ENCODE measurements at regions of chr2 and their contacts with region 1.

Region 1: GRCh38 chr2:101328474-101329007 is 20.0 kb upstream of the RNF149 start:
- DNase-seq: peak; percentile 68
- H3K4me3 Mint-ChIP-seq: no peak overlapping the region
- H3K27ac Mint-ChIP-seq: no peak overlapping the region
- H3K4me1 Mint-ChIP-seq: peaks cover 17% of the 10 kb centered on the region
- H3K27me3 Mint-ChIP-seq: no peaks in the 10 kb centered on the region

Region 2: DNA sequence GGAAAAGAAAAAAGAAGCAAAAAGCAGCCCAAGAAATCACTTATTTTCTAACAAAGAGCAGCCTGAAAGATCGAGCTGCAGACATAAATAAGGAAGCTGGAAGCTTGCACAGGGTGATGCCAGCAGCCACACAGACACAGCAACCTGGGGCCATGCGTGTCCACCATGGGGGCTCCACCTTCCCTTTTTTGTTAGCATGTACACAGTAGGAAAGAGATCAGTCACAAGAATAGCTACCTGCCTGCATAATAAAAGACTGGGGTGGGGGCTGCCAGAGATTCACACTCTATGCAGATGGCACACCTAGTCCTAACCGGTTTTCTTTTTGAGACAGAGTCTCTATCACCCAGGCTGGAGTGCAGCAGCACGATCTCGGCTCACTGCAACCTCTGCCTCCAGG is 78.7 kb before region 1 on chr2:
- CTCF ChIA-PET with region 1: no interaction called
- POLR2A ChIA-PET with region 1: no interaction called
- DNase-seq: no peak
- H3K4me3 Mint-ChIP-seq: no peak overlapping the region
- H3K27ac Mint-ChIP-seq: no peak overlapping the region
- H3K4me1 Mint-ChIP-seq: peaks cover 27% of the 10 kb centered on the region
- H3K27me3 Mint-ChIP-seq: no peaks in the 10 kb centered on the region

Region 3: DNA sequence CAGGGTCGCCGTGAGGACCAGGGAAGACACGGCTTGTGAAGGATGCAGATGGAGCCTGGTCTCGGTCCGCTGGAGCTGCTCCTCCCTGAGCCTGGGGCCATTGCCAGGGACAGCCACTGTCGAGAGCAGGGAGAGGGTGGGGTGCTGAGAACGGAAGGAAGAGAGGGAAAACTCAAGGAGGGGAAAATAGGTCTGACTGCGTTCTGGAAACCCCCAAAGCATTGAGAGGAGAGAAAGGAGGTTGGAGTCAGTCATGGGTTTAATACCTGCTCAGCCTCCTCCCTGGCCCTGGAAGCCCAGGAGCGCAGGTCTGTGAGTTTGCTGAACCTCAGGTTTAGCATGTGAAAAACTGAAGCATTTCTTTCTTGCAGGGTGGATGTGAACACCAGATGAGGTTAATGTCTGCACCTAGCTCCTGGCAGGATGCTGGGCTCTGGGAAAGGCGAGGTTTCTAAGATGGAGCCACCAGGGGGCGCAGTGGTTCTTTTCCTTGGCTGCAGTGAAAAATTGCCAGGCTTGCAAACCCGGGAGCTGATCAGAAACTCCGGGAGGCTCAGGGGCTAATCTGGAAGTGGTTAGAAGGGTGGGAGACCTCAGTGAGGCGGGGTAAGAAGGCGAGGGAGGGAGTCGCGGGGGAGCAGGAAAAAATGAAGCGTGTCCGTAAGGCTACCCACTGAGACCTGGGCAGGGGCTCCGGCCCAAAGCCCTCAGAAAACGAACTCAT is 13.5 kb after region 1 on chr2:
- CTCF ChIA-PET with region 1: interaction called, 30 read pairs
- POLR2A ChIA-PET with region 1: interaction called, 5 read pairs
- DNase-seq: peak; percentile 74
- H3K4me3 Mint-ChIP-seq: no peak overlapping the region
- H3K27ac Mint-ChIP-seq: peak overlapping the region; percentile 0
- H3K4me1 Mint-ChIP-seq: peaks cover 39% of the 10 kb centered on the region
- H3K27me3 Mint-ChIP-seq: peaks cover 5% of the 10 kb centered on the region

Region 4: GRCh38 chr2:101349893-101350662 is 21.5 kb after region 1 on chr2:
- CTCF ChIA-PET with region 1: interaction called, 15 read pairs
- POLR2A ChIA-PET with region 1: no interaction called
- DNase-seq: peak; percentile 39
- H3K4me3 Mint-ChIP-seq: no peak overlapping the region
- H3K27ac Mint-ChIP-seq: no peak overlapping the region
- H3K4me1 Mint-ChIP-seq: peaks cover 13% of the 10 kb centered on the region
- H3K27me3 Mint-ChIP-seq: peaks cover 10% of the 10 kb centered on the region